ENCODE measurements at regions of chr19 and their contacts with region 1.

Region 1: GRCh38 chr19:48445606-48446481 is at the start of gene GRWD1:
- DNase-seq: peak; percentile 90 to 94
- H3K4me3 ChIP-seq: peak within 1 kb of the TSS; percentile 87 to 96
- H3K27ac ChIP-seq: peak within 1 kb of the TSS; percentile 87 to 91
- H3K4me1 ChIP-seq: no peaks in the 10 kb centered on the region
- H3K27me3 ChIP-seq: peaks cover 0 to 2% of the 10 kb centered on the region in 2 donors
- CTCF ChIP-seq: no peak
- POLR2A ChIP-seq: peak; percentile 37 to 59
- total RNA-seq, gene GRWD1: 7.7 to 33.8 (median 21.3) TPM

Region 2: GRCh38 chr19:48029431-48029830 is 416.4 kb before region 1 on chr19:
- intact Hi-C with region 1: no loop called
- DNase-seq: no peak
- H3K4me3 ChIP-seq: no peak overlapping the region
- H3K27ac ChIP-seq: no peak overlapping the region
- H3K4me1 ChIP-seq: no peaks in the 10 kb centered on the region
- H3K27me3 ChIP-seq: no peaks in the 10 kb centered on the region
- CTCF ChIP-seq: no peak
- POLR2A ChIP-seq: no peak

Region 3: GRCh38 chr19:48391107-48391986 is 54.5 kb before region 1 on chr19 and contains the start of gene KDELR1:
- intact Hi-C with region 1: loop called (anchors 10 kb)
- DNase-seq: peak; percentile 75 to 81
- H3K4me3 ChIP-seq: peak within 1 kb of the TSS; percentile 84 to 91
- H3K27ac ChIP-seq: peak within 1 kb of the TSS; percentile 87 to 92
- H3K4me1 ChIP-seq: peaks cover 0 to 16% of the 10 kb centered on the region in 2 donors
- H3K27me3 ChIP-seq: peaks cover 13 to 29% of the 10 kb centered on the region in 2 donors
- CTCF ChIP-seq: peak; percentile 87 to 92 (median 88)
- POLR2A ChIP-seq: peak; percentile 51 to 73
- total RNA-seq, gene KDELR1: 58.5 to 137 (median 89.3) TPM

Measured in uterus (tissue), 4 donors.